ENCODE measurements at regions of chr13 and their contacts with region 1.

Region 1: DNA sequence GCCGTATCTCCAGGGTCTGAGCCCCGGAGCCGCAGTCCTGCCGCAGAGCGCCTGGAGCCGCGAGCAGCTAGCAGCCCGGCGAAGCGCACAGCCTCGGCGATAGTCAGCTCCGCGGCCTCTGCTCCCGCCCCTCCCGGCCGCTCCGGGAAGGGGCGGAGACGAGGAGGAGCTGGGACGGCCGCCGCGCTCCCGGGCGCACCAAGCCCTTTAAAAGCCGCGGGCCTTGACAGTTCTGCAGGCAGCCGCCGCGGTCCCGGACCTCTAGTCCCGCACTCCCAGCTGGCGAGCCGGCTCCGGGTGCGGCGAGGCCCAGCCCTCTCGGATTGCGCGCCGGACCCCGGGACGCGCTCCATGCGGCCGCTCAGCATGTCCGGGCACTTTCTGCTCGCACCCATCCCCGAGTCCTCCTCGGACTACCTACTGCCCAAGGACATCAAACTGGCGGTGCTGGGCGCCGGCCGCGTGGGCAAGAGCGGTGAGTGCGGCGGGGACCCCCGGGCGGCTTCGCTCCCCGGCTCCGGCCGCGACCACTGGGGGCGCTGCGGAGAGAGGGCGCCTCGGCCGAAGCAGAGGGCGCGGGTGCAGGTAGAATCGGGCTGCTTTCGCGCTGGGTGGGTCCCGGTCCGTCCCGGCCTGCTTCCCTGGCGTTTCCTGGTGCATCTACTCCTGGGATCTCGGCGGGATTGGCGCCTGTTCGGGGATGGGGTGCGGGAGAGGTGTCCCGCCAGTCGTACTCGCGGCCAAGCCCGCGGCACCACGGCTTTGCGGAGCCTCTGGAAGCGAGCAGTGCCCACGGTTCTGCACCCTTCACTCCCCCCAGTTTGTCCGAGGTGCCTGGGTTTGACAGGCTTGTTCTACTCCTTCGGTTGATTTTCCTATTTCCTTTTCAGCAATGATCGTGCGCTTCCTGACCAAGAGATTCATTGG is at the start of gene RASL11A:
- DNase-seq: peak; percentile 49 to 85 (median 74)
- ATAC-seq: peak; percentile 93
- H3K4me3 ChIP-seq: peak within 1 kb of the TSS; percentile 58 to 88
- H3K4me3 Mint-ChIP-seq: peak within 1 kb of the TSS; percentile 92
- H3K27ac ChIP-seq: peak within 1 kb of the TSS in 1 of 2 experiments; percentile 46
- H3K27ac Mint-ChIP-seq: peak within 1 kb of the TSS; percentile 86
- H3K4me1 ChIP-seq: peaks cover 9% of the 10 kb centered on the region
- H3K4me1 Mint-ChIP-seq: peaks cover 25% of the 10 kb centered on the region
- H3K27me3 ChIP-seq: no peaks in the 10 kb centered on the region
- H3K27me3 Mint-ChIP-seq: peaks cover 2% of the 10 kb centered on the region
- CTCF ChIP-seq: peak; percentile 98
- total RNA-seq, gene RASL11A: 9.0 to 12.9 TPM

Region 2: GRCh38 chr13:27242706-27243105 is 28.2 kb before region 1 on chr13:
- CTCF ChIA-PET with region 1: interaction called, 10 read pairs
- POLR2A ChIA-PET with region 1: no interaction called
- intact Hi-C with region 1: loop called in 1 of 2 experiments (anchors 5 kb)
- DNase-seq: no peak
- ATAC-seq: no peak
- H3K4me3 ChIP-seq: no peak overlapping the region
- H3K4me3 Mint-ChIP-seq: no peak overlapping the region
- H3K27ac ChIP-seq: no peak overlapping the region
- H3K27ac Mint-ChIP-seq: no peak overlapping the region
- H3K4me1 ChIP-seq: no peaks in the 10 kb centered on the region
- H3K4me1 Mint-ChIP-seq: peaks cover under 1% of the 10 kb centered on the region
- H3K27me3 ChIP-seq: no peaks in the 10 kb centered on the region
- H3K27me3 Mint-ChIP-seq: no peaks in the 10 kb centered on the region
- CTCF ChIP-seq: no peak

Region 3: GRCh38 chr13:27293873-27294515 is 23.1 kb after region 1 on chr13:
- CTCF ChIA-PET with region 1: interaction called, 5 read pairs
- POLR2A ChIA-PET with region 1: interaction called, 4 read pairs
- intact Hi-C with region 1: loop called in 1 of 2 experiments (anchors 2 kb)
- DNase-seq: peak in 6 of 9 experiments; percentile 22 to 66 (median 38)
- ATAC-seq: peak; percentile 86
- H3K4me3 ChIP-seq: peak overlapping the region in 1 of 2 experiments; percentile 26
- H3K4me3 Mint-ChIP-seq: peak overlapping the region; percentile 52
- H3K27ac ChIP-seq: peak overlapping the region; percentile 32 to 38
- H3K27ac Mint-ChIP-seq: peak overlapping the region; percentile 86
- H3K4me1 ChIP-seq: peaks cover 34% of the 10 kb centered on the region
- H3K4me1 Mint-ChIP-seq: peaks cover 29% of the 10 kb centered on the region
- H3K27me3 ChIP-seq: no peaks in the 10 kb centered on the region
- H3K27me3 Mint-ChIP-seq: no peaks in the 10 kb centered on the region
- CTCF ChIP-seq: no peak

Region 4: GRCh38 chr13:27306364-27306763 is 35.5 kb after region 1 on chr13:
- CTCF ChIA-PET with region 1: no interaction called
- POLR2A ChIA-PET with region 1: no interaction called
- intact Hi-C with region 1: no loop called
- DNase-seq: no peak
- ATAC-seq: no peak
- H3K4me3 ChIP-seq: no peak overlapping the region
- H3K4me3 Mint-ChIP-seq: no peak overlapping the region
- H3K27ac ChIP-seq: no peak overlapping the region
- H3K27ac Mint-ChIP-seq: peak overlapping the region; percentile 1
- H3K4me1 ChIP-seq: peaks cover 21% of the 10 kb centered on the region
- H3K4me1 Mint-ChIP-seq: peaks cover 36% of the 10 kb centered on the region
- H3K27me3 ChIP-seq: no peaks in the 10 kb centered on the region
- H3K27me3 Mint-ChIP-seq: no peaks in the 10 kb centered on the region
- CTCF ChIP-seq: no peak

Region 5: DNA sequence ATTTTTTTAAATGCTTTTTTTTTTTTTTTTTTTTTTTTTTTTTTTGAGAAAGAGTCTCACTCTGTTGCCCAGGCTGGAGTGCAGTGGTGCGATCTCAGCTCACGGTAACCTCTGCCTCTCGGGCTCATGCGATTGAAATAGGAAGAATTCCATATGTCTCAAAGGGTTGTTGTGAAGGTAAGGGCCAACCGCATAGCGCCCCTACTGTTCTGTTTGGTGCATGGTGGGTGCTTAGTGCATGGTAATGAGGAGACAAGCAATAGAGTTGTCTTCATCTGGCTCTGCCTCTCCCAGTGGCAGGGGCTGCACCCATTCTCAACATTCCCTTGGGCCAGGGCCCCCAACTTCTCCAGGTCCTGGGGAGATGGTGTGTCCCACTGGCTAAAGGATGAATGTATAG is 68.4 kb after region 1 on chr13:
- CTCF ChIA-PET with region 1: interaction called, 10 read pairs
- POLR2A ChIA-PET with region 1: no interaction called
- intact Hi-C with region 1: loop called (anchors 5 kb)
- DNase-seq: peak in 8 of 9 experiments; percentile 18 to 64 (median 42)
- ATAC-seq: peak; percentile 85
- H3K4me3 ChIP-seq: no peak overlapping the region
- H3K4me3 Mint-ChIP-seq: no peak overlapping the region
- H3K27ac ChIP-seq: no peak overlapping the region
- H3K27ac Mint-ChIP-seq: no peak overlapping the region
- H3K4me1 ChIP-seq: no peaks in the 10 kb centered on the region
- H3K4me1 Mint-ChIP-seq: peaks cover 4% of the 10 kb centered on the region
- H3K27me3 ChIP-seq: peaks cover 0 to 3% of the 10 kb centered on the region in 2 experiments
- H3K27me3 Mint-ChIP-seq: peaks cover 7% of the 10 kb centered on the region
- CTCF ChIP-seq: peak; percentile 56

Measured in CD8-positive, alpha-beta T cell (primary cell).